K562 (cell line): ENCODE measurements at regions of chr4 and their contacts with region 1.

Region 1: DNA sequence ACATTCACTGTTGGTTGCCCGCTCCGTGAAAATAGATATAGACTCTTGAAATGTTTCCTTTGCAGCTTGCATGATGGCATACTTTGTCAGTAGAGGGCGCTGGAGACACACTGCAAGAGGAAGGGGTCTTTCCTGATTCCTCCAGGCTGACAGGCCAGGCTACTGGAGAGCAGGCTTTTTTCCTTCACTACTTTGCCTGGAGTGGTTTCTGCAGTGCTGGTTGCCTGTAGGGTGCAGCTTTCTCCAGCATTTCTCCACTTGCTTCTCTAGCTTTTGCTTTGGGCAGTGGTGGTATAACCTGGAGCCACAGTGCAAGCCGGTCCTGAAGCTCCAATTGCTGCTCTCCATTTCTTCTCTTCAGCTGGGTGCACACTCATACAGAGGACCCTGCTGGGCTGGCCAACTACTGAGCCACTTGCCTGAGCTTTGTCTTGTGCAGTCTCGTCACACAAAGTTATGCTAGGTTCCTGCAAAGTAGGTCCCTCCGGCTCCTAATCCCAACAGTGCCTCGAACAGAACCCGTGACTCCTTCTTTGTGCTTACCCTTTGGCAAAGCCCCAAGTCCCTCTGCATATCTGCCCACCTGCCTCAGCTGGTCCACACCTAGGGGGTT is 46.3 kb downstream of the RASSF6 start:
- DNase-seq: peak; percentile 16 to 84 (median 33)
- ATAC-seq: peak; percentile 92
- H3K4me3 ChIP-seq: no peak overlapping the region
- H3K27ac ChIP-seq: no peak overlapping the region
- H3K4me1 ChIP-seq: no peaks in the 10 kb centered on the region
- H3K27me3 ChIP-seq: no peaks in the 10 kb centered on the region
- CTCF ChIP-seq: peak; percentile 87 to 88 (median 87)
- EP300 ChIP-seq: no peak
- POLR2A ChIP-seq: no peak
- RAD21 ChIP-seq: peak; percentile 73 to 85

Region 2: GRCh38 chr4:73341454-73341853 is 232.4 kb before region 1 on chr4:
- CTCF ChIA-PET with region 1: interaction called, 3 read pairs
- POLR2A ChIA-PET with region 1: no interaction called
- in situ Hi-C with region 1: no loop called
- intact Hi-C with region 1: loop called (anchors 1 kb)
- DNase-seq: peak; percentile 12 to 67 (median 20)
- ATAC-seq: peak; percentile 93
- H3K4me3 ChIP-seq: no peak overlapping the region
- H3K27ac ChIP-seq: no peak overlapping the region
- H3K4me1 ChIP-seq: peaks cover 0 to 2% of the 10 kb centered on the region in 2 experiments; a peak in 1 of 5 replicates
- H3K27me3 ChIP-seq: no peaks in the 10 kb centered on the region
- CTCF ChIP-seq: peak; percentile 65 to 84 (median 83)
- EP300 ChIP-seq: no peak
- POLR2A ChIP-seq: no peak
- RAD21 ChIP-seq: peak; percentile 88 to 91

Region 3: DNA sequence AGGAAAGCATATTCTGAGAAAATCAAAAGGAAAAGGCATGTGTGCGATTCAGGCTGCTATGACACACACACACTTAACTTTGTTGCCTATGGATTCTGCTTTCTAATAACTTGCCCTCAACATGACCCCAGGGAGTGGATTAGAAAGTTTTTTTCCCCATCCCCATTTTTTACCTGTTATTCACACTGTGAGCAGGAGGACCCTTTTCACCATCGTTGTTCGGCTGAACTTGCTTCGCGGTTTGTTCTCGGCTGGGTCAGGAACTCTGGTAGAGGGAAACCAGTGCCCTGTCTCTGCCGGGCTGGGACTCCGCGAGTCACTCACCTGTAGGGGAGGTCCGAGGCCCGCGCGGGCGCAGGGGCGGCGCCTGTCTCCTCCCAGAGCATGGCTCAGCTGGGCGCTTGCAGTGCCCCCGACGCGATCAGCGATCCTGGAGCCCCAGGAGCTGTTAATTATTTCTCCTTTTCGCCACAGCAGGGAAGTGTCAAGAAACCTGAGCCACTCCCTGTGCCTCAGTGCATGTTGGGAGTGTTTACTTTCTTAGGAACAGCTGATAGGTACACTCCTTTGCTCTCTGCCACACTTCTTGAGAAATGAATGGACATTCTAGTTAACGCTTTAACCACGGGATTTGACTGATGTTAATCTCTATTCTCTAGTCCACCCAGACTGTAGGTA is 46.4 kb after region 1 on chr4 and contains the start of gene RASSF6:
- CTCF ChIA-PET with region 1: no interaction called
- POLR2A ChIA-PET with region 1: no interaction called
- in situ Hi-C with region 1: no loop called
- intact Hi-C with region 1: no loop called
- DNase-seq: peak in 3 of 4 experiments; percentile 9 to 61 (median 27)
- ATAC-seq: peak; percentile 95
- H3K4me3 ChIP-seq: peak within 1 kb of the TSS; percentile 38
- H3K27ac ChIP-seq: no peak within 1 kb of the TSS
- H3K4me1 ChIP-seq: peaks cover 5% of the 10 kb centered on the region in 2 experiments; a peak in 3 of 5 replicates
- H3K27me3 ChIP-seq: no peaks in the 10 kb centered on the region
- CTCF ChIP-seq: peak in 1 of 3 experiments; percentile 8; a peak in 1 of 6 replicates
- EP300 ChIP-seq: no peak
- POLR2A ChIP-seq: no peak
- RAD21 ChIP-seq: no peak
- polyA plus RNA-seq, gene RASSF6: 0.04 TPM in 1 of 2 experiments, not detected in the other

Region 4: GRCh38 chr4:73803213-73803612 is 229.3 kb after region 1 on chr4:
- CTCF ChIA-PET with region 1: no interaction called
- POLR2A ChIA-PET with region 1: no interaction called
- in situ Hi-C with region 1: no loop called
- intact Hi-C with region 1: loop called (anchors 10 kb)
- DNase-seq: peak in 1 of 4 experiments; percentile 12
- ATAC-seq: peak; percentile 75
- H3K4me3 ChIP-seq: no peak overlapping the region
- H3K27ac ChIP-seq: no peak overlapping the region
- H3K4me1 ChIP-seq: no peaks in the 10 kb centered on the region; a peak in 1 of 5 replicates
- H3K27me3 ChIP-seq: no peaks in the 10 kb centered on the region
- CTCF ChIP-seq: peak in 2 of 3 experiments; percentile 38 to 40; a peak in 3 of 6 replicates
- EP300 ChIP-seq: no peak
- POLR2A ChIP-seq: no peak
- RAD21 ChIP-seq: peak in 1 of 2 experiments; percentile 57; a peak in 2 of 4 replicates

Region 5: GRCh38 chr4:73917081-73917501 is 343.2 kb after region 1 on chr4:
- CTCF ChIA-PET with region 1: no interaction called
- POLR2A ChIA-PET with region 1: no interaction called
- in situ Hi-C with region 1: no loop called
- intact Hi-C with region 1: loop called (anchors 10 kb)
- DNase-seq: no peak
- ATAC-seq: no peak
- H3K4me3 ChIP-seq: no peak overlapping the region
- H3K27ac ChIP-seq: no peak overlapping the region
- H3K4me1 ChIP-seq: peaks cover 0 to 2% of the 10 kb centered on the region in 2 experiments; a peak in 1 of 5 replicates
- H3K27me3 ChIP-seq: no peaks in the 10 kb centered on the region
- CTCF ChIP-seq: no peak
- EP300 ChIP-seq: no peak
- POLR2A ChIP-seq: no peak
- RAD21 ChIP-seq: no peak

Region 6: GRCh38 chr4:74123065-74123728 is 549.3 kb after region 1 on chr4:
- CTCF ChIA-PET with region 1: no interaction called
- POLR2A ChIA-PET with region 1: no interaction called
- in situ Hi-C with region 1: no loop called
- intact Hi-C with region 1: no loop called
- DNase-seq: no peak
- ATAC-seq: peak; percentile 41; the same call in 2 of the 3 replicates
- H3K4me3 ChIP-seq: no peak overlapping the region
- H3K27ac ChIP-seq: no peak overlapping the region
- H3K4me1 ChIP-seq: no peaks in the 10 kb centered on the region
- H3K27me3 ChIP-seq: no peaks in the 10 kb centered on the region
- CTCF ChIP-seq: no peak
- EP300 ChIP-seq: no peak
- POLR2A ChIP-seq: no peak
- RAD21 ChIP-seq: no peak